Left ventricle myocardium superior (tissue), 1 donor: ENCODE measurements at regions of chr17 and their contacts with region 1.

Region 1: GRCh38 chr17:5584383-5585286 is at the start of gene NLRP1:
- DNase-seq: peak; percentile 90
- ATAC-seq: peak; percentile 96
- total RNA-seq, gene NLRP1: 8.4 TPM

Region 2: GRCh38 chr17:6421700-6422604 is 837.3 kb after region 1 on chr17:
- intact Hi-C with region 1: loop called (anchors 5 kb)
- DNase-seq: peak; percentile 76
- ATAC-seq: peak; percentile 87

Region 3: DNA sequence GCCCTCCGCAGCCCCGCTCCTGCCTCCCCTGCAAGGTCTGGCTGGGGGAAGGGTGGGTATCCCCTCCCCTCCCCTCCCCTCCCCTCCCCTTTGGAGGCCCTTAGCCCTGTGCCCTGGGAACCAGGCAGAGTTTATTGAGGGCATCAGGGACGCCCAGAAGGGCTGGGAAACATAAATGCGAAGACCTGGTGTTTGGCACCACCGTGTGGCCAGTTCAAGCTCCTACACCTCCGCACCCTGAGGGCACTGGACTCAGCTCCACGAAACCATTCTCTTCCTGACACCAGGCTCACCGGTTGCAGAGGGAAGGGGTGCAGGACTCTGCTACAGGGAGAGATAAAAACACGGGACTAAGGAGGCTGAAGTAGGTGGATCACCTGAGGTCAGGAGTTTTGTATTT is 851.3 kb after region 1 on chr17:
- intact Hi-C with region 1: loop called (anchors 5 kb)
- DNase-seq: peak; percentile 61
- ATAC-seq: peak; percentile 86